Activated naive CD4-positive, alpha-beta T cell treated with anti-CD3 and anti-CD28 coated beads, Interleukin-2, amount 10 ng/mL, durations not matched to agents 7 days and 5 days (primary cell): ENCODE measurements at regions of chr18 and their contacts with region 1.

Region 1: DNA sequence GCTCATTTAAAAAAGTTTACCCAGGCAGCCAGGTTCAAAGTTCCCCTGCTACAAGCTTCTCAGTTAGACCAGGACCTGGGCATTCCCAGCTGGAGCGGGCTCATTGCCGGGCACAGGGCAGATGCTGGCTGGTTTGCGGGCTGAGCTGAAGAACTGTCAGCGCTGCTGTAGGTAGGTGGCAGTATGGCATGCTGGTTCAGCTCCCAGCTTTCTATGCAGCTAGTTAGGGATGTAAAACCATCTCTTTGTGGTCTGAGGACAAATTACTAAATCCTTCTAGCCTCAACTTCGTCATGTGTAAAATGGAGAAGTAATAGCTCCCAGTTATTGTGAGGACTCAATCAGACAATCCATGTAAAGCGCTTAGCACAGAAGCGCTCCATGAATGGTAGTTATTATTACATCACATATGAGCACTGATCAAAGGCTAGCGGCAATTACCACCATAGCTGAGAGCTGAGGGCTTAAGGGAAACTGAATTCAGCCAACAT is 2.4 kb upstream of the LDLRAD4 start:
- DNase-seq: peak; percentile 71
- H3K4me3 Mint-ChIP-seq: peak overlapping the region; percentile 70
- H3K27ac Mint-ChIP-seq: no peak overlapping the region
- H3K4me1 Mint-ChIP-seq: peaks cover 35% of the 10 kb centered on the region
- H3K27me3 Mint-ChIP-seq: peaks cover 50% of the 10 kb centered on the region

Region 2: DNA sequence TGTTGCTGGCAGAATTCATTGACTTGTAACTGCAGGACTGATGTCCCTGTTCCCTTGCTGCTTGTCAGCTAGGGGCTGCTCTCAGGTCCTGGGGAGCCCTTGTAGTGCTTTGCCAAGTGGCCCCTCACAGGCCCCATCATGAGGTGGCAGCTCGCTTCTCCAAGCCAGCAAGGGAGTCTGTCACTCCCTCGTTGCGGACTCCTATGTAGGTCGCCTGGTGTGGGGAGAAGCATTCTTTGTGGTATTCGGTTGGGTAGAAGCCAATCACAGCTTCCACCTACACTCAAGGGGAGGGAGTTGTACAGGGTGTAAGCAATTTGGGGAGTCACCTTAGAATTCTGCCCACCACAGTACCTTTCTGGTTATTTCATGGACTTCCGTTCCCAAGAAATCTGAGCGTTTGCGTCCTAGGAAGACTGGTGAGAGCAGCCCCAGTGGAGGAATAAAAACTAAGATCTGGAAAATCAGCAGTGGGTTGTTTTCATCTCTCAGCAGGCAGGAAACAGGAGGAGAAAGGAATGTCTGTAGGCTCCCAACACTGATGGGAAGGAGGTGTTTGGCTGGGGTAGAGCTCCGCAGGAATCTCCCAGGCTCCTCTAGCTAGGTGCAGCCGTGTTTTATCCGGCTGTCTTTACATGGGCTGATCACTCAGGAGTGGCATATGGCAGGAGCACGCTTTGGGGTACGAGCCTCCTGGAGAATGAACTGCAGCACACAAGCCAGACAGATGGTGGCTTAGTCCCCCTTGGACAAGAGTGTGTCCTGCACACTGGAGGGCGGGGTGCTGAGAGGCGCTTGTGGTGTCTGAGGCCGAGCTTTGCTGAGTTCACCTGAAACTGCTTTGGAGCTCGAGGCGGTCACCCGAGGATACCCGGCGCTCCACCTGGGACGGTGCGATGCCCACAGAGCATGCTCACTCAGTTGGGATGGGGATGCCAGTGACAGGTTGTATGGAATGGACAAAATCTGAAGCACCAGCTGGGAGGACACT is 60.7 kb after region 1 on chr18:
- CTCF ChIA-PET with region 1: interaction called, 13 read pairs
- DNase-seq: no peak
- H3K4me3 Mint-ChIP-seq: no peak overlapping the region
- H3K27ac Mint-ChIP-seq: peak overlapping the region; percentile 45
- H3K4me1 Mint-ChIP-seq: peaks cover 77% of the 10 kb centered on the region
- H3K27me3 Mint-ChIP-seq: no peaks in the 10 kb centered on the region

Region 3: DNA sequence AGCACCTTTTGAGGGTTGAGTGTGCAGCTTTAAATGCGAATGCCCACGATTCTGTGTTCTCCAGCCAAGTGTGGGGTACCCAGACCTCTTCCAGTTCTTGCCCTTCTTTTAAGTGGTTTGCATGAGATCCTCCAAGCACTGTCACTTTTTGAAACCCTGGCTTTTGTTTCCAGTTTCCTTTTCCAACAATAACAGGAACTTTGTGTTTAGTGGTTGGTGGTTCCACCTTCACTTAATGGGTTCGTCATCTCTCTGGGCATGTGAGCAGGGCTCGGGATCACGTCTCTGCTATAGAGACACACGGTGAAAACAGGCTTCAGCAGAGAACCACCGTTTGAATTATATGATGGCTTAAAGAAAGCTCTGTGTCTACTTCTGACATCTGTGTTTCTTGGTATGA is 200.1 kb after region 1 on chr18:
- CTCF ChIA-PET with region 1: no interaction called
- DNase-seq: no peak
- H3K4me3 Mint-ChIP-seq: no peak overlapping the region
- H3K27ac Mint-ChIP-seq: no peak overlapping the region
- H3K4me1 Mint-ChIP-seq: peaks cover 23% of the 10 kb centered on the region
- H3K27me3 Mint-ChIP-seq: no peaks in the 10 kb centered on the region

Region 4: DNA sequence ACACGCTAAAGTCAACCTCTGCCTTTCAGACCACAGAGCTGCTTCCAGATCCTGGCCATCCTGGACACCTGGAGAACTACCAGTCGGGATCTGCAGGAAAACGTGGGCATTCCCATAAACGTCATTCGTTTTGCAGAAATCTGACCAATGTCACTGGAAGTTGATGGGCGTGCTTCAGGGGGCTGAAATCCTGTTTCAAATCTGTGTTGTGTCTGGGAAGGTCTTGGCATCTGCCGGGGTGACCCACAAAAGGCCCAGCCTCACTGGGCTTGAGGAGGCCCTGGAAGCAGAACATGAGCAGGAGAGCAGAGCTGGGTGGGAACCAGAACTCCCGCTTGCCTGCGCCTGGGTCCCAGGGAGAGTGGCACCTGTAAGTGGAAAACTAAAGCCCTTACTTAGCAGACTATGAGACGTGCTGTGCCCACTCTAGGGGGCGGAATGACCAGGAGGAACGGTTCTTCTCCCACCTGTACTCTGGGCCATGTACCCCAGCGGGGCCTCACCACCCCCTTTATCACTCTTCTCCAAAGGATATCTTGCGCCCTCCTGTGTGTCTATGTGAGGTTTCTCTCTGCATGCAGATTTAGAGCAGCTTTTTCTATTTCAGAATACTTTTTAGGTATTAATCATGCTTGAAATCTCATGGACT is 309.4 kb after region 1 on chr18:
- CTCF ChIA-PET with region 1: interaction called, 23 read pairs
- DNase-seq: no peak
- H3K4me3 Mint-ChIP-seq: no peak overlapping the region
- H3K27ac Mint-ChIP-seq: no peak overlapping the region
- H3K4me1 Mint-ChIP-seq: peaks cover 4% of the 10 kb centered on the region
- H3K27me3 Mint-ChIP-seq: no peaks in the 10 kb centered on the region

Region 5: GRCh38 chr18:13539050-13539449 is 322.9 kb after region 1 on chr18:
- CTCF ChIA-PET with region 1: interaction called, 11 read pairs
- DNase-seq: peak; percentile 43
- H3K4me3 Mint-ChIP-seq: peak overlapping the region; percentile 44
- H3K27ac Mint-ChIP-seq: peak overlapping the region; percentile 77
- H3K4me1 Mint-ChIP-seq: peaks cover 45% of the 10 kb centered on the region
- H3K27me3 Mint-ChIP-seq: no peaks in the 10 kb centered on the region

Region 6: DNA sequence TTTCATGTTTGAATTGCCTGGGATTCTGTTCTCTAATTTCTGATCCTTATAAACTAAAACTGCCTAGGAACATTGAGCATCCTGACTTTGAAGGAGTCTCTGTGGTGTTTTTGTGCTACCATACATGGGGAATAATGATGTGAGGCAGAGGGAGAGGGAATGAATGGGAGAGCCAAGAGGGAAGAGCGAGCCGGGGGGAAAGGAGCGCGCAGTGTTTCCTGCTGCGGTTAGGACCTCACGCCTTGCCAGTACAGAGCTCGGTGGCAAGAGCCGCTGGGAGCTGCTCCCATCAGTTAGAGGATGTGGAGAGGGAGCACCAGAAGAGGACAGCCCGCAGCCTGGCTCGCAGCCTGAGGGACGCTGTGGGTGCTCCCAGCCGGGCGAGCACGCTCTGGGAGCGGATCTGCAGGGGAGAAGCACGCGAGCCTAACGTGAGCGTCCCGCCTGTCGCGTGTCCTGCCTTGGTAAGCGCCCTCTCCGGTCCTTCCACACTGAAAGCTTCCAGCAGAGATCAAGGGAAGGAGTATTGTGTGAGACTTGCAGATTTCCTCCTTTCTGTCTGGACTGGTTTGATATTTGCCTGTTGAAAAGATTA is 395.6 kb after region 1 on chr18:
- CTCF ChIA-PET with region 1: interaction called, 28 read pairs
- DNase-seq: peak; percentile 38
- H3K4me3 Mint-ChIP-seq: peak overlapping the region; percentile 71
- H3K27ac Mint-ChIP-seq: peak overlapping the region; percentile 90
- H3K4me1 Mint-ChIP-seq: peaks cover 92% of the 10 kb centered on the region
- H3K27me3 Mint-ChIP-seq: no peaks in the 10 kb centered on the region